Dendritic cell treated with granulocyte-macrophage colony-stimulating factor and Interleukin-4, amounts not matched to agents 40 ng/mL and 50 ng/mL, for 4 days (primary cell): ENCODE measurements at regions of chr9 and their contacts with region 1.

Region 1: GRCh38 chr9:94213511-94214124 is 45.5 kb upstream of the ZNF169 start:
- H3K4me3 Mint-ChIP-seq: peak overlapping the region; percentile 40
- H3K27ac Mint-ChIP-seq: no peak overlapping the region
- H3K4me1 Mint-ChIP-seq: peaks cover 5% of the 10 kb centered on the region
- H3K27me3 Mint-ChIP-seq: peaks cover 10% of the 10 kb centered on the region

Region 2: GRCh38 chr9:93670208-93671019 is 543.2 kb before region 1 on chr9:
- intact Hi-C with region 1: loop called (anchors 5 kb)
- H3K4me3 Mint-ChIP-seq: no peak overlapping the region
- H3K27ac Mint-ChIP-seq: no peak overlapping the region
- H3K4me1 Mint-ChIP-seq: peaks cover 5% of the 10 kb centered on the region
- H3K27me3 Mint-ChIP-seq: no peaks in the 10 kb centered on the region

Region 3: DNA sequence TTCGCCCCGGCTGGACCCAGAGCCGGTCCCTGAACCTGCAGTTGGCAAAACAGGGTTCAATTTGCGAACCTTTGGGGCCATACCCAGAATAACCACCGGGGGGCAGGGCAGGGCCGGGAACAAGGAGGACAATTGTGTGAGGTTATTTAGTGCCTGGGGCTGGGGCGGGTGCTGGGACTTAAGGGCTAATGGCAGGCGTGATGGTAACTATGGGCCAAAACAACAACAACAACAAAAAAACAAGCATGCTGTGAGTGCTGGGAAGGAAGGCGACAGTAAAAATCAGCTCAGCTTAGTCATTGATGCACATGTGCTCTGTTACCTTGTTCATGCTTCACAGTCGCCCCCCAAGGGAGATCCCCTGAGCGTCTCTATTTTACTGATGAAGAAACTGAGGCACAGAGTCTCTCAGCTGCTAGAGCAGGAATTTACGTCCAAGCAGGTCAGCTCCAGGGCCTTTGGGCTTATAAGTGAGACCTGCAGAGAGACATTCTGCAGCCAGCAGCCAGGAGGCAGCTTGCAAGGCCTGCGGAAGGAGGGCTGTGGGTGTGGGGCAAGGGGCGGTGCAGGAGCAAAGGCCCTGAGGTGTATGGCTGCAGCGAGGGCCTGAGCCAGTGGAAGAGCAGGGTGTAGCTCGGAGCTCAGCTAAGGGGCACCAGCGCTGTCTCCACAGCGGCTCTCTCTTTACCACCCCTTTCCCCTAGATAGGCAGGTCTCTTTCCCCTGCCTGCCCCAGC is 531.2 kb before region 1 on chr9:
- intact Hi-C with region 1: loop called (anchors 2 kb)
- H3K4me3 Mint-ChIP-seq: no peak overlapping the region
- H3K27ac Mint-ChIP-seq: no peak overlapping the region
- H3K4me1 Mint-ChIP-seq: peaks cover 5% of the 10 kb centered on the region
- H3K27me3 Mint-ChIP-seq: peaks cover 9% of the 10 kb centered on the region

Region 4: DNA sequence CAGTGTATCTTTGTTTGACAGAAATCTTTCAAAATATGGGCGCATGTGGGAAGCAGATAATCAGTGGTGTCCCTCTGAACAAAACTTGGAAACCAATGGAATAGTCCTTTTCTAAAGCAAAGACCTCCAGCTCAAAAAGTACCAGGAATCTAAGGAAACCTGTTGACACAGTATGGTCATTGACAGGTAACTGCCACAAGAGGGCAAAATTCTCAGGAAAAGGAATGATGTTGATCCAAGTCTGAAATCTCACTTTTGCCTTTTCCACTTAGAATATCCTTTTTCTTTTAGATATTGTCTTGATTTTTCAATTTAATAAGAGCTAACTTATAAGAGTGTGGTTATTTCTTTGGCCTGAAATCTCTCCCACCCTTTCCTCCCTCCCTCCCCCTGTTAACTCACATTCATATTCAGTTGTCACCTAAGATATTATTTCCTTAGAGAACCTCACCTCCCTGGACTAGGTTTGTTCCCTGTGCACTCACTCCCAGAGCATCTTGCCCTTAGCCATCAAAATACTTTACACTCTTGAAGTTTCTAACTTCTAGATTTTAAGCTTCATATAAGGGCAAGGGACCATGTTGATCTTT is 199.5 kb before region 1 on chr9:
- intact Hi-C with region 1: loop called (anchors 1 kb)
- H3K4me3 Mint-ChIP-seq: no peak overlapping the region
- H3K27ac Mint-ChIP-seq: no peak overlapping the region
- H3K4me1 Mint-ChIP-seq: no peaks in the 10 kb centered on the region
- H3K27me3 Mint-ChIP-seq: peaks cover 3% of the 10 kb centered on the region

Region 5: GRCh38 chr9:94065535-94065961 is 148.1 kb before region 1 on chr9:
- intact Hi-C with region 1: loop called (anchors 1 kb)
- H3K4me3 Mint-ChIP-seq: no peak overlapping the region
- H3K27ac Mint-ChIP-seq: no peak overlapping the region
- H3K4me1 Mint-ChIP-seq: peaks cover 7% of the 10 kb centered on the region
- H3K27me3 Mint-ChIP-seq: no peaks in the 10 kb centered on the region

Region 6: DNA sequence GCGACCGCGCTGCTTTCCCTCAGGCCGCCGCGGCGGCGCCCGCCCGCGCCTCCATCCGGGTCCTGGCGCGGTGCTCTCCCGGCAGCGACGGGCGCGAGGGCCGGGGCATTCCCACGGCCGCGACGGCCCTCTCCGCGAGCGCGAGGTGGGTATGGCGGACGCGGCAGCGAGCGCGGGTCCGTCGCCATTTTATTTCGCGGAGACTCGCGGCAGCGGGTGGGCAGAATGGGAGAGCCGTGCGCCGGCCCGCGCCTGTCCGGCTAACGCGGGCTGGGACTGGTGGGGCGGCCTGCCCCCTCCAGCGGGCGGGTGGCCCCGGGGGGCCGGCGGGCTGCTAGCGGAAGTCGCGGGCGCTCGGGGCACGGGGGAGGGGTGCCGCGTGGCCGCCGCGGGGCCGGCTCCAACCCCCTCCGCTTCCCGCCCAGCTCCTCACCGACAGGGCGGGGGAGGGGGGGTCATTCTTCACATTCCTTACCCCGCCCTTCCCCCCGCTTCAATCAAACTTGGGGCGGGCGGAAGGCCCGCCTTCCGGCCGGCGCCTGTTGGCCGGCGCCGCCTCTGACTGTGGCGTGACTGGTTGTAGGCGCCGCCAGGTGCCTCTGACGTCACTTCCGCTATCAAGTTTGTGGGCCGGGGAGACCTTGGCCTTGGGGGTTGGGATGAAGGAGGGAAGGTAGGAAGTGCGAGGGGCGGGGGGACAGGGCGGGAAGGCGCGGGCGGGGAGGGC is 47.2 kb before region 1 on chr9:
- intact Hi-C with region 1: loop called (anchors 2 kb)
- H3K4me3 Mint-ChIP-seq: peak overlapping the region; percentile 89
- H3K27ac Mint-ChIP-seq: peak overlapping the region; percentile 94
- H3K4me1 Mint-ChIP-seq: peaks cover 25% of the 10 kb centered on the region
- H3K27me3 Mint-ChIP-seq: no peaks in the 10 kb centered on the region